GM12878 (cell line): ENCODE measurements at regions of chr7 and their contacts with region 1.

Region 1: GRCh38 chr7:37027557-37028341 is 303.5 kb upstream of the AOAH start:
- DNase-seq: no peak
- ATAC-seq: no peak
- H3K4me3 ChIP-seq: no peak overlapping the region
- H3K27ac ChIP-seq: no peak overlapping the region
- H3K4me1 ChIP-seq: no peaks in the 10 kb centered on the region
- H3K27me3 ChIP-seq: no peaks in the 10 kb centered on the region
- CTCF ChIP-seq: peak in 1 of 3 experiments; percentile 29; a peak in 2 of 6 replicates
- EP300 ChIP-seq: no peak
- POLR2A ChIP-seq: no peak
- RAD21 ChIP-seq: peak; percentile 51; the same call in 1 of the 2 replicates

Region 2: GRCh38 chr7:36931892-36932291 is 95.9 kb before region 1 on chr7:
- CTCF ChIA-PET with region 1: no interaction called
- POLR2A ChIA-PET with region 1: no interaction called
- RAD21 ChIA-PET with region 1: no interaction called
- SMC1A ChIA-PET with region 1: no interaction called
- in situ Hi-C with region 1: no loop called
- intact Hi-C with region 1: no loop called
- DNase-seq: no peak
- ATAC-seq: no peak
- H3K4me3 ChIP-seq: no peak overlapping the region
- H3K27ac ChIP-seq: no peak overlapping the region
- H3K4me1 ChIP-seq: no peaks in the 10 kb centered on the region
- H3K27me3 ChIP-seq: no peaks in the 10 kb centered on the region
- CTCF ChIP-seq: no peak
- EP300 ChIP-seq: no peak
- POLR2A ChIP-seq: no peak
- RAD21 ChIP-seq: no peak

Region 3: DNA sequence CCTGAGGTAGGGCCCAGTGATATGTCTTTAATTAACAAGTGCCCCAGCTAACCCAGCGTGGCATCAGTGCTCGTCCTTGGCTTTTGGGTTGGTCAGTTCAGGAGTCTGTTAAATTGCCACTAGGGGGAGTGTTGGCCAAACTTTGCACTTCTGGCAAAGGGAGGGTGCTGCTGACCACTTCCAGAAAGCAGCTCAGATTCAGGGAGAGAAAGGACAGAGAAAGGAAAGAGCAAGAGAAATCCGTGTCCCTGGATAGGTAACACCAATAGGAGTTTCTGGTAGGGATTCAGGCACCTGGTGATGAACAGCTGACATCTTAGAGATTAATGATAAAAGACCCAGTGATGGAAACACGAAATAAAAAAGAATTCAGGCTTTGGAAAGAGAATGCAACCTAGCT is 60.4 kb before region 1 on chr7:
- CTCF ChIA-PET with region 1: interaction called, 19 read pairs
- POLR2A ChIA-PET with region 1: no interaction called
- RAD21 ChIA-PET with region 1: interaction called, 4 read pairs
- SMC1A ChIA-PET with region 1: interaction called, 11 read pairs
- in situ Hi-C with region 1: no loop called
- intact Hi-C with region 1: no loop called
- DNase-seq: no peak
- ATAC-seq: peak; percentile 98
- H3K4me3 ChIP-seq: no peak overlapping the region
- H3K27ac ChIP-seq: no peak overlapping the region
- H3K4me1 ChIP-seq: no peaks in the 10 kb centered on the region
- H3K27me3 ChIP-seq: no peaks in the 10 kb centered on the region
- CTCF ChIP-seq: peak; percentile 51 to 70 (median 53)
- EP300 ChIP-seq: no peak
- POLR2A ChIP-seq: no peak
- RAD21 ChIP-seq: no peak

Region 4: GRCh38 chr7:37016064-37016878 is 11.5 kb before region 1 on chr7:
- CTCF ChIA-PET with region 1: interaction called, 12 read pairs
- POLR2A ChIA-PET with region 1: interaction called, 3 read pairs
- RAD21 ChIA-PET with region 1: interaction called, 21 read pairs
- SMC1A ChIA-PET with region 1: interaction called, 43 read pairs
- in situ Hi-C with region 1: no loop called
- intact Hi-C with region 1: no loop called
- DNase-seq: no peak
- ATAC-seq: peak; percentile 57
- H3K4me3 ChIP-seq: no peak overlapping the region
- H3K27ac ChIP-seq: no peak overlapping the region
- H3K4me1 ChIP-seq: peaks cover 16% of the 10 kb centered on the region
- H3K27me3 ChIP-seq: no peaks in the 10 kb centered on the region
- CTCF ChIP-seq: no peak
- EP300 ChIP-seq: no peak
- POLR2A ChIP-seq: no peak
- RAD21 ChIP-seq: no peak

Region 5: DNA sequence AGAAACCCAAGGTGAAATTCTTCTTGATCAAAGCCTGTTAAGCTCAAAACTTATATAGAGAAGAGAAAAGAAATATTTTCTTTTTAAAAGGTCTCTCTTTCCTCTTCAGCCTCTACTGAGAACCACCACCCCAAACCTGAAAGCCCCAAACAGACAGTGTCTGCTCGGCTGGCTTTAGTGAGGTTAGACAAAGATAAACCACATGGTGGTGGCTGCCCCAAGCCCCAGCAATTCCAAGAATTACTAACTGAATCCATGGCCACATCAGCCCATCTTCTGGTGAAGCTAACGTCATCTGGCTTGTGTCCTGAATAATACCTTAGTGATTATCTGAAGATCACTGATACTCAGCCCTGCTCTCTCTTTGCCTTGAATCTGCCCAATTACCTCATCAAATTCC is 145.9 kb after region 1 on chr7:
- CTCF ChIA-PET with region 1: interaction called, 8 read pairs
- POLR2A ChIA-PET with region 1: interaction called, 3 read pairs
- RAD21 ChIA-PET with region 1: interaction called, 85 read pairs
- SMC1A ChIA-PET with region 1: interaction called, 15 read pairs
- in situ Hi-C with region 1: no loop called
- intact Hi-C with region 1: no loop called
- DNase-seq: no peak
- ATAC-seq: no peak
- H3K4me3 ChIP-seq: no peak overlapping the region
- H3K27ac ChIP-seq: no peak overlapping the region
- H3K4me1 ChIP-seq: no peaks in the 10 kb centered on the region
- H3K27me3 ChIP-seq: no peaks in the 10 kb centered on the region
- CTCF ChIP-seq: no peak
- EP300 ChIP-seq: no peak
- POLR2A ChIP-seq: no peak
- RAD21 ChIP-seq: no peak